ENCODE measurements at regions of chr2 and their contacts with region 1.

Region 1: GRCh38 chr2:135741395-135742324 is at the start of gene UBXN4:
- DNase-seq: peak; percentile 99
- H3K4me3 ChIP-seq: peak within 1 kb of the TSS; percentile 91 to 98 (median 97)
- H3K27ac ChIP-seq: peak within 1 kb of the TSS; percentile 84
- H3K4me1 ChIP-seq: peaks cover 29% of the 10 kb centered on the region
- H3K27me3 ChIP-seq: no peaks in the 10 kb centered on the region
- CTCF ChIP-seq: peak; percentile 63 to 70
- POLR2A ChIP-seq: peak; percentile 79
- total RNA-seq, gene UBXN4: 103 and 108 TPM in 2 replicates

Region 2: GRCh38 chr2:134918526-134919340 is 822.9 kb before region 1 on chr2 and contains the start of gene CCNT2:
- CTCF ChIA-PET with region 1: no interaction called
- POLR2A ChIA-PET with region 1: no interaction called
- dilution Hi-C with region 1: no loop called
- intact Hi-C with region 1: loop called (anchors 2 kb)
- DNase-seq: peak; percentile 99
- H3K4me3 ChIP-seq: peak within 1 kb of the TSS; percentile 93 to 100 (median 100)
- H3K27ac ChIP-seq: peak within 1 kb of the TSS; percentile 91
- H3K4me1 ChIP-seq: peaks cover 17% of the 10 kb centered on the region
- H3K27me3 ChIP-seq: no peaks in the 10 kb centered on the region
- CTCF ChIP-seq: no peak
- POLR2A ChIP-seq: peak; percentile 63
- total RNA-seq, gene CCNT2: 35.4 and 35.5 TPM in 2 replicates

Region 3: DNA sequence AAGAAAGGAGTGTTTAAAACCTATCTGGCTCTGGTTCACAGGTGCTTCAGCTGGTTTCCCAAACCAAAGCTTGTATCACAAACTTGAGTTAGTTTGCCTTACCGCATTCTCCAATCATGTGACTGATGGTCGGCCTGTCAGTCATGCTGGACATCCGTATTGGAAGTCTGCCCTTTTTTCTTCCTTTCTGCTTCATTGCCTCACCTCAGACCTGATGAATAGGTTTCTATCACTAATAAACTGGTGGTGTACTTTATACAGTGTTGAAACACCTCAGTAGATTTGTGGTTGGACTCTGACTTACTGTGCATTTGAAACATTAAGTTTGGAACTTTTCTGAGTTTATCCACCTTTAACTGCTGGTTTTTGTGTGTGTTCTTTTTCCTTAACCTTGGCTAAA is 126.3 kb before region 1 on chr2:
- CTCF ChIA-PET with region 1: no interaction called
- POLR2A ChIA-PET with region 1: no interaction called
- dilution Hi-C with region 1: no loop called
- intact Hi-C with region 1: no loop called
- DNase-seq: no peak
- H3K4me3 ChIP-seq: no peak overlapping the region
- H3K27ac ChIP-seq: no peak overlapping the region
- H3K4me1 ChIP-seq: no peaks in the 10 kb centered on the region
- H3K27me3 ChIP-seq: no peaks in the 10 kb centered on the region
- CTCF ChIP-seq: no peak
- POLR2A ChIP-seq: no peak

Region 4: DNA sequence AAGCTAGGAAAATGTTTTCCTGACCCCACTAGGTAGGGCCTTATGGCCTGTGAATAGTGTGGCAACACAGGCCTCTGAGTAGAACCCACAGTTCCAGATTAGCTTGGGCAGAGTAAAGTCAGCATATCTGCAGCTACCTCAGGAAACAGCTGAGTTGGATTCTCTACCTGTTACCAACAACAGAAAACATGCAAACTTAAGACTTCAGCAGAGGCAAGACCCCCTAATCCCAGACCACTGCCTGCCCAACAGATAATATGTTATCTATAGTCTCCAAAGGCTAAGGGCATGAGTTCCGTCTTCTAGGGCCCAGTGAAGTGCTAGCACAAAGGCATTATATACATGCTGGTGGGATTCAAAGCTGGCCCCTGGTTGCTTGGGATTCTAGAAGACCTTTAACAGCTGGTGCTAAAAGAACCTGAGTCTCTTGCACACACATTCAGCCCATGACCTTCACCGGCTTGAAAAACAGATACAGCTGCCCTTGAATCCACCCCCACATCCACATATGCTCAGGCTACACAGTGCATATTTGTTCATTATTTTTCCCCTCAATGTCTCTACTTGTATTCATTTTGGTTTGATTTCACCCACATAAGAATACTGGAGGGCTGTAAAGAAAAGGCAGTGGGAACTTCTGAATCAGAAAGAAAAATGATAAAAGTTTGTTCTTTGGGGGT is 13.5 kb before region 1 on chr2:
- CTCF ChIA-PET with region 1: no interaction called
- POLR2A ChIA-PET with region 1: no interaction called
- dilution Hi-C with region 1: no loop called
- intact Hi-C with region 1: no loop called
- DNase-seq: no peak
- H3K4me3 ChIP-seq: no peak overlapping the region
- H3K27ac ChIP-seq: no peak overlapping the region
- H3K4me1 ChIP-seq: no peaks in the 10 kb centered on the region
- H3K27me3 ChIP-seq: no peaks in the 10 kb centered on the region
- CTCF ChIP-seq: no peak
- POLR2A ChIP-seq: no peak

Region 5: DNA sequence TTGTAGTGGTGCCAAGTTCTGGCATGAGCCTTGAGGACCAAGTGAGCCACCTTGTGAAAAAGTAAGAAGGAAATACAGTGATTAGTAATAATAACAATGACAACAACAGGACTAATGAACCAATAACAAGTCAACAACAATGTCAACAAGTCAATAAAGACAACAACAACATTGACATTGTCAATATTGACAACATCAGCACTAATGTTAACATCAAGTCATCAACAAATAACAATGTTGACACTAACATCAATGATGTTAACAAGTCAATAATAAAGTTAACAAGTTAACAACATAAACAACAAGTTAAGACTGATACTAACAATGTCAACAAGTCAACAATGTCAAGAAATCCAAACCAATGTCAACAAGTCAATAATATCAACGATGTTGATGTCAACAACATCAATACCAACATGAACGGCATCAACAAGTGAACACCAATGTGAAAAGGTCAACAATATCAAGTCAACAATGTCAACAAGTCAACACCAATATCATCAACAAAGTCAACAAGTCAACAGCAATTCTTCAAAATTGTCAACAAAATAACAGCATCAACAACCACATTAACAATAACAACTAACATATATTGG is 71.3 kb after region 1 on chr2:
- CTCF ChIA-PET with region 1: no interaction called
- POLR2A ChIA-PET with region 1: no interaction called
- dilution Hi-C with region 1: no loop called
- intact Hi-C with region 1: no loop called
- DNase-seq: no peak
- H3K4me3 ChIP-seq: no peak overlapping the region
- H3K27ac ChIP-seq: no peak overlapping the region
- H3K4me1 ChIP-seq: no peaks in the 10 kb centered on the region
- H3K27me3 ChIP-seq: peaks cover 0 to 3% of the 10 kb centered on the region in 2 experiments
- CTCF ChIP-seq: no peak
- POLR2A ChIP-seq: no peak

Region 6: DNA sequence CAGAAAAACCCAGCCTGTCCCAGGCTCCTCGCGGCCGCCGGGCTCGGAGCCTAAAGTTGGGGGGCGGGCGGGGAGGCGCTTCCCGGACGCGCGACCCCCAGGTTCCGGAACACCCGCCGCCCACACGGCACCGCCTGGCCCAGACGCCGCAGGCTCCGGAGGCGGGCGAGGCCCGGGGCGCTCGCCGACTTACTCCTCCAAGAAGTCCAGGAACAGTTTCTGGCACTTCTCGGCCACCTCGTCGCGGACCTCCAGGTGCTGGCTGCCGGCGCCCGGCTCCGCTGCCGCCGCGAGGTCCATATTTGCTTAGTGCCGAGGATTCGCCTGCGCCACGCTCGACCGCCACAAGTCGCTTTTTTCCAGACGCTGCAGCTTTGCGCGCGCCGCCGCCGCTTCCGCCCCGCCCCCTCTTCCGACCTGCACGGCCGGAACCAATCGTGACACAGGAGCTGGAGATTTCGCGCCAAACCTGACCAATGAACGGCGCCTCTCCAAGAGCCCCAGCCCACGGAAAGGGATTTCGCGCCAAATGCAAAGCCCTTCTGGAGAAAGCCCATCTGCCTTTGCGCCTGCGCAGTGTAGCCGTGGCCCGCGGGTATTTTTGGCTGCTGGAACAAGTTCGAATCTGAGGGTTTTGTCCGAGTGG is 134.5 kb after region 1 on chr2 and contains the start of gene MCM6:
- CTCF ChIA-PET with region 1: no interaction called
- POLR2A ChIA-PET with region 1: no interaction called
- dilution Hi-C with region 1: no loop called
- intact Hi-C with region 1: loop called (anchors 5 kb)
- DNase-seq: peak; percentile 99
- H3K4me3 ChIP-seq: peak within 1 kb of the TSS; percentile 75 to 83 (median 76)
- H3K27ac ChIP-seq: peak within 1 kb of the TSS; percentile 58
- H3K4me1 ChIP-seq: peaks cover 5% of the 10 kb centered on the region
- H3K27me3 ChIP-seq: no peaks in the 10 kb centered on the region
- CTCF ChIP-seq: no peak
- POLR2A ChIP-seq: peak; percentile 26
- total RNA-seq, gene MCM6: 48.1 and 52.6 TPM in 2 replicates

Measured in endothelial cell of umbilical vein (primary cell).